ENCODE measurements at regions of chr5 and their contacts with region 1.

Region 1: DNA sequence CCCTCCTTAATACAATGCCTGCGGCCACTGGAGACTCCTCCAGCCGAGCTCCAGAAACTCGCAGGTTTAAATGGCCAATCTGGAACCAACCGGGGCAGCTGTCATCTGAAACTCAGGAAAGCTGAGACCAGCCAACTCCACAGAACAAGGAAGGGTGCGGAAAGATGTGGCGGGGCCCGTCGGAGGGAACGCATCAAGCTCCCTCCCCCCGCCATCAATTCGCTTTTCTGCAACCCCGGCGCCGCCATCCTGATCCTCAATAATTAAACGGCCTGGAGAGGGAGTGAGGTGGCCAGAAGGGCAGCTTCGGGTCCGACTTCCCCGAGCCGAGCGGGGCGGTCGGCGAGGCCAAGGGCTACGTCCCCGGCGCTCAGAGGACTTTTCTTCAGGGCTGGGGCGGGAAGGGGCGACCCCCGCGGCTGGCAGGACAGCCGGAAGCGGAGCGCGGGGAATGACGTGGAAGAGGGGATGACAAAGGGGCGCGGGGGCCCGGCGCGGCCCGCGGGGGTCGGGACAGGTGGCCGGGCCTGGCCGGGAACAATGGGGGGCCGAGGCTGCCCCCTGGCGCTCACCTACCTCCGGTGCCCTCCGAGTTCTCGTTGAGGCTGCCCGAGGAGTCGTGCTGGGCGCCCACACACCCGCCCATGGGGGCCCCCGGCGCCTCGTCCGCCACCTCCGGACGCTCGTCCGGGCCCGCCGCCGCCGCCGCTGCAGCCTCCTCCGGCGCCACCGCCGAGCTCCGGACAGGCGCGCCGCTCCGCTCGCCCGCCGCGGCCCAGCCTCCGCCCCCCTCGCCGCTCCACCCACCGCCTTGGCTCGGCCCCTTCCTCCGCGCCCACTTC is at the start of gene UBTD2:
- DNase-seq: peak; percentile 90
- H3K4me3 ChIP-seq: peak within 1 kb of the TSS; percentile 83 to 99 (median 91)
- H3K27ac ChIP-seq: peak within 1 kb of the TSS; percentile 93 to 96 (median 94)
- H3K4me1 ChIP-seq: peaks cover 0 to 30% (median 21%) of the 10 kb centered on the region in 4 donors
- H3K27me3 ChIP-seq: no peaks in the 10 kb centered on the region
- CTCF ChIP-seq: peak in 2 of 4 experiments; percentile 42 to 49
- EP300 ChIP-seq: no peak
- POLR2A ChIP-seq: peak in 1 of 2 donors; percentile 8
- total RNA-seq, gene UBTD2: 16.3 to 22.1 (median 19.5) TPM

Region 2: GRCh38 chr5:171387345-171387969 is 895.8 kb before region 1 on chr5 and contains the start of gene NPM1:
- intact Hi-C with region 1: loop called (anchors 10 kb)
- DNase-seq: peak; percentile 99
- H3K4me3 ChIP-seq: peak within 1 kb of the TSS; percentile 62 to 93 (median 80)
- H3K27ac ChIP-seq: peak within 1 kb of the TSS; percentile 87 to 97 (median 94)
- H3K4me1 ChIP-seq: peaks cover 0 to 44% (median 30%) of the 10 kb centered on the region in 4 donors
- H3K27me3 ChIP-seq: no peaks in the 10 kb centered on the region
- CTCF ChIP-seq: no peak
- EP300 ChIP-seq: peak in 2 of 4 donors; percentile 7 to 8
- POLR2A ChIP-seq: peak; percentile 89 to 96
- total RNA-seq, gene NPM1: 722 to 951 (median 753) TPM

Region 3: DNA sequence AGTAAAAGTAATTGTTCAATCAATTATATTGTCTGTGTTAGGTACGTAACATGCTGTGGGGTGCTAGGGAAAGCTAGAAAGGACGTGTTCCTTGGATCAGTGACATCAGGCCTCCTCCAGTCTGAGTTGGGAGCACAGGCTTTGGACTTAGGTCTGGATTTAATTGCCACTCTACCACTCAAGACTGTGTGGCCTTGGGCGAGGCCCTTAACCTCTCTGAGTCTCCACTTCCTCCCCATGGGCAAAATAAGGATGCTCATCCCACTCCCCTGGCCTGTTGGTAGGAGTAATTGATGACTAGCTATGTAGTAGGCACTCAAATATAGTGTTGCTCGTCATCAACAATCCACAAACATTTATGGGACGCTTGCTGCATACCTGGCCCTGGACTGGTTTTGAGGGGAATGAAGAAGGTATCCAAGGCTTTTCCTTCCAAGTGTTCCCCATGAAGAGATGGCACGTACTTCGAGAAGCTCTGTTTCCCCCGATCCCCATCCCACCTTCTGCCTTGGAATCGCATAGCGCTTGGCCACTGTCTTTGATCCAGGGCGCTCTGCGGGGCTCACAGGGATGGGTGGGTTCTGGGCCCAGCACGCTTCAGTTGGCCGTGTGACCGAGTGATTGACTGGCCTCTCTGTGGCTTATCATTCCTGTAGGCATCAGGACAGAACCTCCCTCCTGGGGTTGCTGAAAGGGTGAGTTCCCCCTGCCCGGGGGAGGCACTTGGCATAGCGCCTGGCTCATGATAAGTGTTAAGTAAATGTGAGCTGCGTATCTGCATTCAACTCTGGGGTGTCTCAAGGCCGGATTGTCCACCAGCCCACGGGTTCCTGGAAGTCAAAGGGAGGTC is 855.7 kb before region 1 on chr5:
- intact Hi-C with region 1: no loop called
- DNase-seq: peak; percentile 59
- H3K4me3 ChIP-seq: no peak overlapping the region
- H3K27ac ChIP-seq: no peak overlapping the region
- H3K4me1 ChIP-seq: no peaks in the 10 kb centered on the region
- H3K27me3 ChIP-seq: no peaks in the 10 kb centered on the region
- CTCF ChIP-seq: no peak
- EP300 ChIP-seq: no peak
- POLR2A ChIP-seq: no peak

Region 4: DNA sequence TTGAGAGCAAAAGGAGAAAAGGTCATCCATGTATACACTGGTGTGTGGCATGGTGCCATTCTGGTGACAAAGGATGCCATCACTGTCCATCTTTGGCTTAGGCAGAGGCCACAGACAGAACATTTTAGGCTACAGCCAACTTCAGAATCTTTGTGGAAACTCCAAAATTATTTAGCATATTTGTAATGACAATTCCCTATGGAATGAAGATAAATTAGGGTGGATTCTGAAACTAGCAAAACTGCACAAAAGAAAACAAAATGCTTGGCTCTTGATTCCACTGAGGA is 369.3 kb before region 1 on chr5:
- intact Hi-C with region 1: loop called (anchors 5 kb)
- DNase-seq: no peak
- H3K4me3 ChIP-seq: no peak overlapping the region
- H3K27ac ChIP-seq: no peak overlapping the region
- H3K4me1 ChIP-seq: peaks cover 0 to 29% (median 18%) of the 10 kb centered on the region in 4 donors
- H3K27me3 ChIP-seq: no peaks in the 10 kb centered on the region
- CTCF ChIP-seq: no peak
- EP300 ChIP-seq: no peak
- POLR2A ChIP-seq: no peak

Region 5: GRCh38 chr5:172006321-172007174 is 276.7 kb before region 1 on chr5 and contains the start of gene FBXW11:
- intact Hi-C with region 1: loop called (anchors 5 kb)
- DNase-seq: peak; percentile 99
- H3K4me3 ChIP-seq: peak within 1 kb of the TSS; percentile 79 to 99 (median 96)
- H3K27ac ChIP-seq: peak within 1 kb of the TSS; percentile 92 to 99 (median 98)
- H3K4me1 ChIP-seq: peaks cover 0 to 46% (median 40%) of the 10 kb centered on the region in 4 donors
- H3K27me3 ChIP-seq: no peaks in the 10 kb centered on the region
- CTCF ChIP-seq: no peak
- EP300 ChIP-seq: no peak
- POLR2A ChIP-seq: peak; percentile 77 to 79
- total RNA-seq, gene FBXW11: 42.9 to 67.1 (median 49.4) TPM

Region 6: GRCh38 chr5:172106511-172107356 is 176.5 kb before region 1 on chr5:
- intact Hi-C with region 1: loop called (anchors 2 kb)
- DNase-seq: peak; percentile 78
- H3K4me3 ChIP-seq: peak overlapping the region; percentile 28 to 43 (median 36)
- H3K27ac ChIP-seq: peak overlapping the region; percentile 24 to 70 (median 57)
- H3K4me1 ChIP-seq: peaks cover 0 to 62% (median 53%) of the 10 kb centered on the region in 4 donors
- H3K27me3 ChIP-seq: no peaks in the 10 kb centered on the region
- CTCF ChIP-seq: peak; percentile 62 to 98 (median 90)
- EP300 ChIP-seq: no peak
- POLR2A ChIP-seq: no peak

Region 7: GRCh38 chr5:172188033-172188892 is 95.0 kb before region 1 on chr5 and contains the start of gene STK10:
- intact Hi-C with region 1: loop called (anchors 1 kb)
- DNase-seq: peak; percentile 96
- H3K4me3 ChIP-seq: peak within 1 kb of the TSS; percentile 72 to 87 (median 80)
- H3K27ac ChIP-seq: peak within 1 kb of the TSS; percentile 89 to 93 (median 92)
- H3K4me1 ChIP-seq: peaks cover 0 to 26% (median 16%) of the 10 kb centered on the region in 4 donors
- H3K27me3 ChIP-seq: no peaks in the 10 kb centered on the region
- CTCF ChIP-seq: peak; percentile 70 to 91 (median 81)
- EP300 ChIP-seq: no peak
- POLR2A ChIP-seq: no peak
- total RNA-seq, gene STK10: 8.9 to 16.1 (median 12.6) TPM

Measured in sigmoid colon (tissue), 7 donors.